ENCODE measurements at regions of chr18 and their contacts with region 1.

Region 1: DNA sequence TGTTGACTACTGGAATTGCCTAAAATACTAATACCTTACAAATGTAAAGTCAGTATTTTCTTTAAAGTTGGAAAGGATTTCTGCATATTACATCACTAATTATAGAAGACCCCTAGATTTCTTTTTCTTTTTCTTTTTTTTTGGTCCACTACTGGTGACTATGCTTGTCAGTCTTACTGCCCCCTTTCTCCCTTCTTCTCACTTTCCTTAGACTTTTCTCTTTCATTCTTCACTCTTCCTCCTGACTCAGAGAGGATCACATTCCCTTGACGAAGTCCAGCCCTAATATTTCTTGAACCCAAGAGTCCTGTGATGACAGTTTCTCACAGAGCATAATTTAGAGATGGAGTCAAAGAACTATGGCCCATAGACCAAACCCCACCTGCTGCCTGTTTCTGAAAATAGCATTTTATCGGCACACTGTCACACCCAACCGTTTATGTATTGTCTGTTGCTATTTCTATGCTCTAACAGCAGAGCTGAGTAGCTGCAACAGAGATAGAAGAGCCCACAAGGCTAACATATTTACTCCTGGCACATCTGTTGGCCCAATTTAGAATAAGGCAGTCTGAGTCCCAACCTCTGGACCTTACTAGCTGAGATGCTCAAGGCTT is 40.6 kb upstream of the RIOK3 start:
- DNase-seq: no peak
- ATAC-seq: peak in 1 of 2 experiments; percentile 50; a peak in 2 of 6 replicates
- H3K4me3 ChIP-seq: no peak overlapping the region
- H3K27ac ChIP-seq: no peak overlapping the region
- H3K4me1 ChIP-seq: peaks cover 6% of the 10 kb centered on the region; the same call in 1 of the 3 replicates
- CTCF ChIP-seq: no peak
- EP300 ChIP-seq: no peak
- POLR2A ChIP-seq: no peak
- RAD21 ChIP-seq: no peak

Region 2: GRCh38 chr18:23032030-23032582 is 380.4 kb before region 1 on chr18:
- CTCF ChIA-PET with region 1: interaction called, 35 read pairs
- POLR2A ChIA-PET with region 1: no interaction called
- DNase-seq: no peak
- ATAC-seq: no peak; a peak in 1 of 6 replicates
- H3K4me3 ChIP-seq: no peak overlapping the region
- H3K27ac ChIP-seq: peak overlapping the region; percentile 10 to 61; a peak in 3 of 6 replicates
- H3K4me1 ChIP-seq: peaks cover 14% of the 10 kb centered on the region
- CTCF ChIP-seq: no peak
- EP300 ChIP-seq: no peak
- POLR2A ChIP-seq: no peak
- RAD21 ChIP-seq: no peak

Region 3: GRCh38 chr18:23077493-23078256 is 334.8 kb before region 1 on chr18:
- CTCF ChIA-PET with region 1: interaction called, 16 read pairs
- POLR2A ChIA-PET with region 1: no interaction called
- DNase-seq: peak; percentile 18 to 73
- ATAC-seq: peak; percentile 89 to 96; a peak in 5 of 6 replicates
- H3K4me3 ChIP-seq: no peak overlapping the region
- H3K27ac ChIP-seq: peak overlapping the region; percentile 68 to 77
- H3K4me1 ChIP-seq: peaks cover 17% of the 10 kb centered on the region
- CTCF ChIP-seq: peak; percentile 47
- EP300 ChIP-seq: no peak
- POLR2A ChIP-seq: no peak
- RAD21 ChIP-seq: peak; percentile 77 to 78

Region 4: DNA sequence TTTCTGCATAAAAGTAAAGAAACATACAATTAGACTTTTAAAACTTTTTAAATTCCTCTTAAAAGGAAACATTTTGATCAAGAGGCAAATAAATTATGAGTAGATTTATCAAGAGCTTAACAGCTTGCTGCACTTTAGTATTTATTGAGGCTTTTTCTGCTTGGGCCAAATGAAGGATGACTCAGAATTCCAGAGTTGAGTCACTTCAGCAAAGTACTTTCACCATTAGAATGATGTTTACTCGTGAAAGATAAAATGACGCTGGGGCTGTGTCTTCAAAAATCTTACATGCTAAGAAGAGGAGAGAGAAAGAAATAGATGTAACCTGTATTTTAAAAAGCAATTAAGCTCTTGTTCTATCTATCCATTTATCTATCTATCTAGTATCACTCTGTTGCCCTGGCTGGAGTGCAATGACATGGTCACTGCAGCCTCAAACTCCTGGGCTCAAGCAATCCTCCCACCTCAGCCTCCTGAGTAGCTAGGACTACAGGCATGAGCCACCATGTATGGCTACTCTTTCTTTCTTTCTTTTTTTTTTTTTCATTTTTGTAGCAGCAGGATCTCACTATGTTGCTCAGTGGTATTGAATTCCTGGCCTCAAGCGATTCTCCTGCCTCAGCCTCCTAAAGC is 34.7 kb before region 1 on chr18:
- CTCF ChIA-PET with region 1: interaction called, 10 read pairs
- POLR2A ChIA-PET with region 1: no interaction called
- DNase-seq: peak; percentile 34 to 51
- ATAC-seq: peak; percentile 64 to 79; a peak in 5 of 6 replicates
- H3K4me3 ChIP-seq: no peak overlapping the region
- H3K27ac ChIP-seq: peak overlapping the region; percentile 61 to 83
- H3K4me1 ChIP-seq: peaks cover 36% of the 10 kb centered on the region
- CTCF ChIP-seq: no peak
- EP300 ChIP-seq: no peak
- POLR2A ChIP-seq: no peak
- RAD21 ChIP-seq: no peak

Region 5: DNA sequence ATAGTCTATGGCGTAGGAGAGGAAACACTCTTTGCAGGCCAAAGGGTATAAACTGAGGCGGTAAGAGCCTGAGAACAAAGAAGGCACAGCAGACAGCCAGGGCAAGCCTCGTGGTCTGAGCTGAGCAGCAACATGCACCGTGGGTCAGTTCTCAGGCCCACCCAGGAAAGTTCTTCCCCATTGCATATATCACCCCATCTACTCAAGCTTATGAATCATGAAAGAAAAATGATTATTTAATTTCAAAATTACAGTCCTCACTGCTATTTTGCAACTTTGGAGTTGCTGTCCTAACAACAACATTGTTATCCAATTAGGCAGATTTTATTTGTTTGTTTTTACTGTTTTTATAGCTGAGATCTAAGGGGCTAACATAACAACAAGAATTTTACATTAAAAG is 14.1 kb before region 1 on chr18:
- CTCF ChIA-PET with region 1: interaction called, 17 read pairs
- POLR2A ChIA-PET with region 1: no interaction called
- DNase-seq: no peak
- ATAC-seq: no peak
- H3K4me3 ChIP-seq: no peak overlapping the region
- H3K27ac ChIP-seq: no peak overlapping the region
- H3K4me1 ChIP-seq: peaks cover 13% of the 10 kb centered on the region
- CTCF ChIP-seq: no peak
- EP300 ChIP-seq: no peak
- POLR2A ChIP-seq: no peak
- RAD21 ChIP-seq: no peak

Region 6: GRCh38 chr18:23689031-23689615 is 276.7 kb after region 1 on chr18 and contains the start of gene LAMA3:
- CTCF ChIA-PET with region 1: no interaction called
- POLR2A ChIA-PET with region 1: no interaction called
- DNase-seq: peak; percentile 46 to 65
- ATAC-seq: peak; percentile 79 to 89
- H3K4me3 ChIP-seq: peak within 1 kb of the TSS; percentile 67
- H3K27ac ChIP-seq: peak within 1 kb of the TSS; percentile 84 to 97
- H3K4me1 ChIP-seq: peaks cover 31% of the 10 kb centered on the region
- CTCF ChIP-seq: peak; percentile 31; the same call in 2 of the 3 replicates
- EP300 ChIP-seq: no peak
- POLR2A ChIP-seq: peak; percentile 35
- RAD21 ChIP-seq: peak in 1 of 2 experiments; percentile 47; a peak in 3 of 5 replicates
- polyA plus RNA-seq, gene LAMA3: 31.0 and 40.1 TPM in 2 replicates

Measured in A549 (cell line).